ENCODE measurements at regions of chr11 and their contacts with region 1.

Region 1: GRCh38 chr11:108733479-108734116 is 68.7 kb downstream of the DDX10 start:
- DNase-seq: peak; percentile 71
- H3K4me3 Mint-ChIP-seq: peak overlapping the region; percentile 51
- H3K27ac Mint-ChIP-seq: peak overlapping the region; percentile 82
- H3K4me1 Mint-ChIP-seq: peaks cover 52% of the 10 kb centered on the region
- H3K27me3 Mint-ChIP-seq: no peaks in the 10 kb centered on the region

Region 2: GRCh38 chr11:107840129-107840484 is 893.5 kb before region 1 on chr11:
- CTCF ChIA-PET with region 1: no interaction called
- POLR2A ChIA-PET with region 1: no interaction called
- intact Hi-C with region 1: loop called (anchors 1 kb)
- DNase-seq: no peak
- H3K4me3 Mint-ChIP-seq: peak overlapping the region; percentile 53
- H3K27ac Mint-ChIP-seq: peak overlapping the region; percentile 98
- H3K4me1 Mint-ChIP-seq: peaks cover 71% of the 10 kb centered on the region
- H3K27me3 Mint-ChIP-seq: no peaks in the 10 kb centered on the region

Region 3: DNA sequence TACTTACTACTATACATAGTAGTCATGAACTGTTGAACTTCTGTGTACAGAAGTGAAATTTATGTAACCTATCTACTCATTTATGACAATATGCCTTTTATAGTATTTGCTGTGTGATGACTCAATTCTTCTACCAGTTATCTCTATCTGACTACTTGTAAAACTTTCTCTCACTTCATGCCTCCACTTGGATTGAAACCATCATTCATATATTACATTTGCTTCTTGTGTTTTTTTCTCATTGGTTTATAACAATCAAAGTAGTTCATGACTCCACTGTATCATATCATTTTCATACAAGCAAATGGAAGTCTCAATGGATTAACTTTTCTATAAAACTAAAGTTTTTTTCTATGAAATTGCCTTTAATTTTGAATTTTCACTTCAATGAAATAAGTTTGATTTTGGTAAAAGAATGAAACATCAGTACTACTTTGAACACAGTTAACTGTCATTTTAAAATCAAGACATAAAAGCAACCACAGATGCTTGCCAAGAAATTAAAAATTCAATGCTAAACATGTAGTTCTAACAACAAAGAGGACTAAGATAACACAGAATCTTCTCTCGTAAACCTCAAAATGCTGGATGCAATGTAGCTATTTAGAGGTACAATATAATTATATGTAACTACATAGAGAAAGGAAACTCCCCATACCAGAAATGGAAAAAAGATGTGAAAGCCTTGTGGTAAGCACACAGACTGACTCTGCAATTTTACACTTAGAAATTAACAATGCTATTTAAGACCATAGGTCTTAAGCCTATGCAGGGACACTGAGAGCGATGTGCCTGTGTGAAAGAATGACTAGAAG is 112.4 kb before region 1 on chr11:
- CTCF ChIA-PET with region 1: no interaction called
- POLR2A ChIA-PET with region 1: no interaction called
- intact Hi-C with region 1: loop called (anchors 1 kb)
- DNase-seq: no peak
- H3K4me3 Mint-ChIP-seq: no peak overlapping the region
- H3K27ac Mint-ChIP-seq: no peak overlapping the region
- H3K4me1 Mint-ChIP-seq: peaks cover 21% of the 10 kb centered on the region
- H3K27me3 Mint-ChIP-seq: peaks cover 20% of the 10 kb centered on the region

Region 4: GRCh38 chr11:108713076-108713790 is 20.4 kb before region 1 on chr11:
- CTCF ChIA-PET with region 1: interaction called, 11 read pairs
- POLR2A ChIA-PET with region 1: interaction called, 5 read pairs
- intact Hi-C with region 1: loop called (anchors 1 kb)
- DNase-seq: no peak
- H3K4me3 Mint-ChIP-seq: no peak overlapping the region
- H3K27ac Mint-ChIP-seq: peak overlapping the region; percentile 11
- H3K4me1 Mint-ChIP-seq: peaks cover 19% of the 10 kb centered on the region
- H3K27me3 Mint-ChIP-seq: no peaks in the 10 kb centered on the region

Region 5: GRCh38 chr11:108790501-108791299 is 57.1 kb after region 1 on chr11:
- CTCF ChIA-PET with region 1: interaction called, 3 read pairs
- POLR2A ChIA-PET with region 1: no interaction called
- intact Hi-C with region 1: loop called (anchors 2 kb)
- DNase-seq: no peak
- H3K4me3 Mint-ChIP-seq: no peak overlapping the region
- H3K27ac Mint-ChIP-seq: no peak overlapping the region
- H3K4me1 Mint-ChIP-seq: peaks cover 21% of the 10 kb centered on the region
- H3K27me3 Mint-ChIP-seq: no peaks in the 10 kb centered on the region

Region 6: GRCh38 chr11:110349138-110349996 is 1615.8 kb after region 1 on chr11:
- CTCF ChIA-PET with region 1: no interaction called
- POLR2A ChIA-PET with region 1: no interaction called
- intact Hi-C with region 1: loop called (anchors 1 kb)
- DNase-seq: peak; percentile 90
- H3K4me3 Mint-ChIP-seq: peak overlapping the region; percentile 5
- H3K27ac Mint-ChIP-seq: peak overlapping the region; percentile 94
- H3K4me1 Mint-ChIP-seq: peaks cover 60% of the 10 kb centered on the region
- H3K27me3 Mint-ChIP-seq: no peaks in the 10 kb centered on the region